ENCODE measurements at regions of chr3 and their contacts with region 1.

Region 1: GRCh38 chr3:195106418-195106906 is 164.5 kb downstream of the XXYLT1 start:
- DNase-seq: peak; percentile 55
- H3K4me3 ChIP-seq: peak overlapping the region; percentile 35
- H3K27ac ChIP-seq: no peak overlapping the region
- H3K27me3 ChIP-seq: no peaks in the 10 kb centered on the region
- CTCF ChIP-seq: peak; percentile 82

Region 2: GRCh38 chr3:194671900-194672808 is 434.3 kb before region 1 on chr3 and contains the start of gene LSG1:
- in situ Hi-C with region 1: loop called (anchors 25 kb)
- DNase-seq: peak; percentile 92
- H3K4me3 ChIP-seq: peak within 1 kb of the TSS; percentile 99
- H3K27ac ChIP-seq: peak within 1 kb of the TSS; percentile 98
- H3K27me3 ChIP-seq: no peaks in the 10 kb centered on the region
- CTCF ChIP-seq: no peak

Region 3: GRCh38 chr3:194682694-194683310 is 423.7 kb before region 1 on chr3:
- in situ Hi-C with region 1: no loop called
- DNase-seq: peak; percentile 86
- H3K4me3 ChIP-seq: no peak overlapping the region
- H3K27ac ChIP-seq: no peak overlapping the region
- H3K27me3 ChIP-seq: no peaks in the 10 kb centered on the region
- CTCF ChIP-seq: peak; percentile 93

Region 4: DNA sequence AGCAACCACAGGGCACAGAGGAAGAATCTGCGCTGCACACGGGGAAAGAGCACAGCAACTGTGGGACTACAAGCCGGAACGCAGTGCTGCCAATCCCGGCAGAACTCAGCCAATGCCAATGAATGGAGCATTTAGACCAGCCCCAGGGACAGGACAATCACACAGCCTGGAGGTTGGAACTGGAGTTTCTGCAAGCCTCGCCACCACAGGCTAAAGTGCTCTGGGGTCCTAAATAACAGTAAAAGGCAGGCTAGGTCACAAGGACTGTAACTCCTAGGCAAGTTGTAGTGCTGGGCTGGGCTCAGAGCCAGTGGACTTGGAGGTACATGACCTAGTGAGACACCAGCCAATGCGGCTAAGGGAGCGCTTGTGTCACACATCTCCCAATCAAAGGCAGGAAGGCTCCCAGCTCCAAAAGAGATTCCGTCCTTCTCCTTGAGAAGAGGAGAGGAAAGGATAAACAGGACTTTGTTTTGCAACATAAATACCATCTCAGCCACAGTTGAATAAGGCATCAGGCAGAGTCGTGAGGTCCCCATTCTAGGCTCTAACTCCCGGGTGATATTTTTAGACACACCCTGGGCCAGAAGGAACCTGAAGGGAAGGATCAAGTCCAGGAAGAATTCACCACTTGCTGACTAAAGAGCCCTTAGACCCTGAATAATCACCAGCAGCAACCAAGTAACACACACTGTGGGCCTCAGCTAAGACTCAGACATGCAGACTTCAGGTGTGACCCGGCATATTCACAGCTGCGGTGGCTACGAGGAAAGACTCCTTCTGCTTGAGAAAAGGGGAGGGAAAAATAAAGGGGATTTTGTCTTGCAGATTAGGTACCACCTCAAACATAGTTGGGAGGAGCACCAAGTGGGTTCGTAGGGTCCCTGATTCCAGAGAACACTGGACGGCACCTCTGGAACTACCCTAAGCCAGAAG is 250.0 kb after region 1 on chr3:
- in situ Hi-C with region 1: no loop called
- DNase-seq: no peak
- H3K4me3 ChIP-seq: no peak overlapping the region
- H3K27ac ChIP-seq: no peak overlapping the region
- H3K27me3 ChIP-seq: no peaks in the 10 kb centered on the region
- CTCF ChIP-seq: no peak

Measured in brain microvascular endothelial cell (primary cell).